ENCODE measurements at regions of chr11 and their contacts with region 1.

Region 1: DNA sequence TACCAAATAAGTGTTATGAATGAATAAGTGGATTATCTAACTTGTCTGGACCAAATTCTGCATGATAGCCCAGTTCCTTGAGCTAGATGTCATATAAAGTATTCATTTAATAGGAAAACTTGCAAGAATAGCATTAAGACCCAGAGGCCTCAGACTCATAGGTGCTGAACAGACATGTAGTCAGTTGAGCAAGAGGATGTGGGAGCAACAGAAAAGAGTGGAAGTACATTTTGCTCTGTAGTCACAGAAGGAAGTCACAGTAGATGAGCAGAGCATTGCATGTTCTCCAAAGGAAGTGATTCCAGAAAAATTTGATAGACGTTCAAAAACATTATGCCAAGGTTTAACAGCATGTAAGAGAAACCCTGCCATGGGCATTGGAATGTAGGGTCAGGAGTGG is 9.5 kb downstream of the HOATZ start:
- DNase-seq: no peak
- ATAC-seq: no peak
- H3K4me3 Mint-ChIP-seq: no peak overlapping the region
- H3K27ac Mint-ChIP-seq: peak overlapping the region; percentile 13
- H3K4me1 Mint-ChIP-seq: peaks cover 73% of the 10 kb centered on the region
- H3K27me3 Mint-ChIP-seq: no peaks in the 10 kb centered on the region
- CTCF ChIP-seq: no peak

Region 2: DNA sequence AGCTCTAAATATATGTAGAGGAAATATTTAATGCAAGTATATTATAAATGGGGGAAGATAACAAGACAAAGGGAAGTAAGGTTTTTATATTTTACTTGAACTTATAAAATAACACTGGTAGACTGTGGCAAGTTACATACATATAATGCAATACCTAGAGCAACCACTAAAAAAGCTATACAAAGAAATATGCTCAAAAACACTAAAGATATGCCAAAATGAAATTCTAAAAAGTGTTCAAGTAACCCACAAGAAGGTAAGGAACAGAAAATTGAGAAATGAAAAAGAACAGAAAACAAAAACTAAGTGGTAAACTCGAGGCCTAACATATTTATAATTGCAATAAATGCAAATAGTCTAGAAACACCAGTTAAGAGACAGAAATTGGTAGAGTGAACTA is 44.4 kb before region 1 on chr11:
- CTCF ChIA-PET with region 1: no interaction called
- POLR2A ChIA-PET with region 1: no interaction called
- intact Hi-C with region 1: no loop called
- DNase-seq: no peak
- ATAC-seq: no peak
- H3K4me3 Mint-ChIP-seq: no peak overlapping the region
- H3K27ac Mint-ChIP-seq: no peak overlapping the region
- H3K4me1 Mint-ChIP-seq: no peaks in the 10 kb centered on the region
- H3K27me3 Mint-ChIP-seq: peaks cover 6% of the 10 kb centered on the region
- CTCF ChIP-seq: no peak

Region 3: DNA sequence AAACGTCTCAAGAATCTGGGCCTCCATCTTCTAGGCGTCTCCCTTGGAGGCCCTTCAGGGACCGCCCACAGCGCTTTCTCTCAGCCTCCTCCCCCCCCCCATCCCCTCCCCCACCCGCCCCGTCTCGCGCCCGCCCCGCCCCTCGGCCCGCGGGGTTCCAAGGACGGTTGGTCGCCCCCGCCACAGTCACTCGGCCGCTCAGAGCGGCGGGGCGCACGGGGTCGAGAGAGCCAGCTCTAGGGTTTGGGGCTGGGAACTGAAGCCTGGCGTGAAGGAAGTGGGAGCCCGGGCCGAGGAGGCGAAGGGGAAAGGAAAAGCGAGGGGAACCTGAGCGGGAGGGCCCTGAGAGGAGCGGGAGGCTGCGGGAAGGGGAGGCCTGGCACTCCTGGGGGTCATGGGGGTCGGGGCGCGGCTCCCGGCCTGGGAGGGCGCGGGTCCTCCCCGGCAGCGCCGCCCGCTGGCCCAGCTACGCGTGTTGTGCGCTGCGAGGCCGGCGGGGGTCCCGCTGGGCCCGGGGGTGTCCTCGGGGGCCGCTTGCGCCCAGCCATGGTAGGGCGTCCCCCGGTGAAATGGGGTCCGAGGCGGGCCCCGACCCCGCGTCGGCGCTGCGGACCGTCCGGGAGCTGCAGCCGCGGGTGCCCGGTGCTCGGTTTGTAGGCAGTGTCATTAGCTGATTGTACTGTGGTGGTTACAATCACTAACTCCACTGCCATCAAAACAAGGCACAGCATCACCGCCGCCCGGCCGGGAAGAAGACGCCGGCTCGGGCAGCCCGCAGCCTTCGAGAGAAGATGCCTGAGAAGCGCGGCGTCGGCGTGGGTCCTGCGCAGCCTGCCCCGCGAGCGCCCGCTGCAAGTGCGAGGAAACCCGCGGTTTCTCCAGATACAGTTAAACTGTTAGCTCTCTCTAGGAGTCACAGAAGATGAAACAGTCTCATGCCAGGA is 11.5 kb before region 1 on chr11 and contains the start of gene BTG4:
- CTCF ChIA-PET with region 1: interaction called, 11 read pairs
- POLR2A ChIA-PET with region 1: interaction called, 10 read pairs
- intact Hi-C with region 1: no loop called
- DNase-seq: peak; percentile 54
- ATAC-seq: peak; percentile 59
- H3K4me3 Mint-ChIP-seq: peak within 1 kb of the TSS; percentile 78
- H3K27ac Mint-ChIP-seq: peak within 1 kb of the TSS; percentile 79
- H3K4me1 Mint-ChIP-seq: peaks cover 14% of the 10 kb centered on the region
- H3K27me3 Mint-ChIP-seq: peaks cover 41% of the 10 kb centered on the region
- CTCF ChIP-seq: peak; percentile 14
- total RNA-seq, gene BTG4: 0.36 to 0.98 TPM

Region 4: GRCh38 chr11:111565114-111565720 is 41.2 kb after region 1 on chr11:
- CTCF ChIA-PET with region 1: no interaction called
- POLR2A ChIA-PET with region 1: no interaction called
- intact Hi-C with region 1: no loop called
- DNase-seq: peak; percentile 80
- ATAC-seq: peak; percentile 45
- H3K4me3 Mint-ChIP-seq: no peak overlapping the region
- H3K27ac Mint-ChIP-seq: no peak overlapping the region
- H3K4me1 Mint-ChIP-seq: peaks cover 4% of the 10 kb centered on the region
- H3K27me3 Mint-ChIP-seq: peaks cover under 1% of the 10 kb centered on the region
- CTCF ChIP-seq: peak; percentile 97